Naive thymus-derived CD4-positive, alpha-beta T cell (primary cell): ENCODE measurements at regions of chr14 and their contacts with region 1.

Region 1: DNA sequence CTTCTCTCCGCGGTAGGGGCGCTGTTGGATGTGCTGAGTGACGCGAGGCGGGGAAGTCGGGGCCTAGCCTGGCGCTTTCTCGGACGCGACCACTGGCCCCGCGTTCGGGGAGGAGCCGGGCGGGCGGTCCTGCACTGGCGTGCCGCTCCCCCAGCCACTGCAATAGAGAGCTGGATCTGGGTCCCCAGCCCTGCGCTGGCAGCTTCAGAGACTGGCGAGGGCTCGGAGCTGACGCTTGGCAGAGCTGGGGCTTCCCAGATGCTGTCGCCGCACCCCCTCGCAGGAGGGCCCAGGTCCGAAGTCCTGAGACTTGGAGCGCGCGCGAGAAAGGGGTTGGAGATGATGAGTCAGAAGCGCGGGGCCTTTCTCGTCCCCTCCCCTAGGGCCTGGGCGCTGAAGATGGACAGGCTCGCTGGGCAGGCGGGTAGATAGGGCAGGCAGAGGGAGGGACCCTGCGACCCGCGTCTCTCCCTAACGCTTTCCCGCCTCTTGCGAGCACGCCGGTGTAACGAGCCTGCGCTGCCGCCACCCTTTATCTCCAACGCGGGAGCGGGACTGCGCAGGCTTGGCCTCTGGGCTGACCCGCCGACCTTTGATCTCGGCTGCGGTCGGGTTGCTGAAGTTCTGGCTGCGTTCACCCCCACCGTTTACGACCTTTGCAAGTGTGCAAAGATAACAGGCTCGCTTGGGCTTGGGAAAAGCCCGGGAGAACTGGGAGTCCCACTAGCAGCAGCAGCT is 3.0 kb downstream of the TMEM253 start:
- DNase-seq: peak; percentile 87 to 94 (median 92)
- ATAC-seq: peak; percentile 92
- H3K4me3 ChIP-seq: peak overlapping the region; percentile 94
- H3K4me3 Mint-ChIP-seq: peak overlapping the region; percentile 74 to 99 (median 91)
- H3K27ac ChIP-seq: peak overlapping the region; percentile 96
- H3K27ac Mint-ChIP-seq: peak overlapping the region; percentile 25 to 97 (median 89)
- H3K4me1 ChIP-seq: peaks cover 3 to 8% of the 10 kb centered on the region in 2 donors
- H3K4me1 Mint-ChIP-seq: peaks cover 23 to 41% (median 26%) of the 10 kb centered on the region in 7 donors
- H3K27me3 ChIP-seq: peaks cover 0 to 4% of the 10 kb centered on the region in 2 donors
- H3K27me3 Mint-ChIP-seq: peaks cover 0 to 11% (median 0%) of the 10 kb centered on the region in 5 donors

Region 2: DNA sequence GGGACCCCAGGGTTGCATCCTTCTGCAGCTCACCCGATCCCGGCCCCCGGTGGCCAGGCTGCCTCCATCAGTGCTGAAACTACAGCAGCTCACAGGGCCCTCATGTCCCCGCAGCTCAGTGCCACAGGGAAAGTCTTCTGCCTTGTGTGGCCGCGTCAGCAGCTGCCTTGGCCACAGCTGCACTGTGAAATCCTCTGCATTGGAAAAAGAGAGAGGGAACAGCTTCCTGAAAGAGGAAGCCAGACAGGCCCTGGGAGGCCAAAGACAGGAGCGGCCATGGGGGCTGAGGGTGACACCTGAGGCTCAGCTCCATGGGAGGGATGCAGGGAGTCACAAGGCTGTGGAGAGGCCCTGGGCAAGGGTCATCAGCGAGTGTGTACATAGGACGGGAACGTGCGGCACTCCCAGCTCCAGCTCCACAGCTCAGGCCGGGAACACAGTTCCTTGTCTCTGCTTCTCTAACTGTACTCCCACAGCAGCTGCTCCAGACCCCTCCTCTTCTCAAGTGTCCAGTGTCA is 727.7 kb before region 1 on chr14:
- CTCF ChIA-PET with region 1: no interaction called
- POLR2A ChIA-PET with region 1: no interaction called
- intact Hi-C with region 1: no loop called
- DNase-seq: no peak
- ATAC-seq: no peak
- H3K4me3 ChIP-seq: no peak overlapping the region
- H3K4me3 Mint-ChIP-seq: no peak overlapping the region
- H3K27ac ChIP-seq: no peak overlapping the region
- H3K27ac Mint-ChIP-seq: peak overlapping the region in 1 of 9 donors; percentile 41
- H3K4me1 ChIP-seq: no peaks in the 10 kb centered on the region
- H3K4me1 Mint-ChIP-seq: no peaks in the 10 kb centered on the region
- H3K27me3 ChIP-seq: no peaks in the 10 kb centered on the region
- H3K27me3 Mint-ChIP-seq: no peaks in the 10 kb centered on the region

Region 3: GRCh38 chr14:20461274-20462001 is 642.4 kb before region 1 on chr14 and contains the start of gene PIP4P1:
- CTCF ChIA-PET with region 1: no interaction called
- POLR2A ChIA-PET with region 1: no interaction called
- intact Hi-C with region 1: loop called (anchors 2 to 5 kb)
- DNase-seq: peak; percentile 95 to 100 (median 99)
- ATAC-seq: peak; percentile 92
- H3K4me3 ChIP-seq: peak within 1 kb of the TSS; percentile 83
- H3K4me3 Mint-ChIP-seq: peak within 1 kb of the TSS; percentile 81 to 97 (median 92)
- H3K27ac ChIP-seq: peak within 1 kb of the TSS; percentile 96
- H3K27ac Mint-ChIP-seq: peak within 1 kb of the TSS; percentile 88 to 99 (median 92)
- H3K4me1 ChIP-seq: peaks cover 20 to 21% of the 10 kb centered on the region in 2 donors
- H3K4me1 Mint-ChIP-seq: peaks cover 18 to 36% (median 32%) of the 10 kb centered on the region in 7 donors
- H3K27me3 ChIP-seq: no peaks in the 10 kb centered on the region
- H3K27me3 Mint-ChIP-seq: peaks cover 0 to 2% (median 0%) of the 10 kb centered on the region in 5 donors
- total RNA-seq, gene PIP4P1: 34.9 to 87.1 (median 74.2) TPM

Region 4: GRCh38 chr14:20989572-20990551 is 114.0 kb before region 1 on chr14 and contains the start of gene METTL17:
- CTCF ChIA-PET with region 1: no interaction called
- POLR2A ChIA-PET with region 1: no interaction called
- intact Hi-C with region 1: loop called (anchors 1 kb)
- DNase-seq: peak; percentile 64 to 88 (median 81)
- ATAC-seq: peak; percentile 95
- H3K4me3 ChIP-seq: peak within 1 kb of the TSS; percentile 86
- H3K4me3 Mint-ChIP-seq: peak within 1 kb of the TSS; percentile 86 to 97 (median 92)
- H3K27ac ChIP-seq: peak within 1 kb of the TSS; percentile 77
- H3K27ac Mint-ChIP-seq: peak within 1 kb of the TSS; percentile 86 to 98 (median 95)
- H3K4me1 ChIP-seq: peaks cover 12 to 16% of the 10 kb centered on the region in 2 donors
- H3K4me1 Mint-ChIP-seq: peaks cover 0 to 46% (median 37%) of the 10 kb centered on the region in 7 donors
- H3K27me3 ChIP-seq: no peaks in the 10 kb centered on the region
- H3K27me3 Mint-ChIP-seq: no peaks in the 10 kb centered on the region
- total RNA-seq, gene METTL17: 75.4 to 129 (median 96.7) TPM

Region 5: DNA sequence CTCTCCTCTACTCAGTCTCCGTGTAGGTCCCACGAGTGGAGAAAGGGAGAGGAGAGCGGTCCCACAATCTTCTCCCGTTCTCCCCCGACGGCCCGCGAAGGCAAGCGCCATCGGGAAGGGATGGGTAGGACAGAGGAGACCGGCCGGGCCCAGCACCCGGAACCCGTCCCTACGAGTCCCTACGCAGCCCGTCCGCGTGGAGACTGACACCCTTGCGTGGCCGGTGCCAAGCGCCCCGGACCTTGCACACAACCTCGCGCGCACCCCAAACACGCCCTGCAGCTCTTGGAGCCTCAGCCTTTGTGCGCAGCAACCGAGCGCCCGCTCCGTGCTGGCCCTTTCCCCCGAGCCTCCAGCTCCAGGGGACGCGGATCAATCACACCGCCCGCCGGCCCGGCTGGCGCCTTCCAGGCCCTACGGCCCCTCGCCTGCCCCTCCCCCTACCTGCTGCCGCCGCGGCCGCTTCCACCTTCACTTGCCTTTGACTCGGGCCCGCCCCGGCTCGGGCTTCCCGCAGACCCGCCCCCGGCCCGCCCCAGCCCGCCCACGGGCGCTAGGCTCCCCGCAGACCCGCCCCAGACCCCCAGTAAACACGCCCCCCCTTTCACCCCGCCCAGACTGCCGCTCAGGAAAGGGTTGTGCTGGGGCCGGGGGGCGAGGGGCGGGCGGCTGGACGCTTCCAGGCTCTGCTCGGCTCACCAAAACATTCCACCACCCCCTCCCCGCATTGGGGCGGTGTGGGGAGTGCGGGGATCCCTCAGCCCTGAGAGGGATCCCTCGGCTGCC is 79.1 kb before region 1 on chr14 and contains the start of gene NDRG2:
- CTCF ChIA-PET with region 1: interaction called, 158 read pairs
- POLR2A ChIA-PET with region 1: interaction called, 4 read pairs
- intact Hi-C with region 1: loop called in 1 of 2 experiments (anchors 1 kb)
- DNase-seq: peak; percentile 50 to 78 (median 67)
- ATAC-seq: peak; percentile 93
- H3K4me3 ChIP-seq: peak within 1 kb of the TSS; percentile 70
- H3K4me3 Mint-ChIP-seq: peak within 1 kb of the TSS; percentile 84 to 97 (median 92)
- H3K27ac ChIP-seq: peak within 1 kb of the TSS; percentile 70
- H3K27ac Mint-ChIP-seq: peak within 1 kb of the TSS in 8 of 9 donors; percentile 66 to 92 (median 80)
- H3K4me1 ChIP-seq: peaks cover 7 to 13% of the 10 kb centered on the region in 2 donors
- H3K4me1 Mint-ChIP-seq: peaks cover 7 to 28% (median 23%) of the 10 kb centered on the region in 7 donors
- H3K27me3 ChIP-seq: no peaks in the 10 kb centered on the region
- H3K27me3 Mint-ChIP-seq: peaks cover 0 to 47% (median 0%) of the 10 kb centered on the region in 5 donors
- total RNA-seq, gene NDRG2: 5.9 to 39.9 (median 35.2) TPM

Region 6: DNA sequence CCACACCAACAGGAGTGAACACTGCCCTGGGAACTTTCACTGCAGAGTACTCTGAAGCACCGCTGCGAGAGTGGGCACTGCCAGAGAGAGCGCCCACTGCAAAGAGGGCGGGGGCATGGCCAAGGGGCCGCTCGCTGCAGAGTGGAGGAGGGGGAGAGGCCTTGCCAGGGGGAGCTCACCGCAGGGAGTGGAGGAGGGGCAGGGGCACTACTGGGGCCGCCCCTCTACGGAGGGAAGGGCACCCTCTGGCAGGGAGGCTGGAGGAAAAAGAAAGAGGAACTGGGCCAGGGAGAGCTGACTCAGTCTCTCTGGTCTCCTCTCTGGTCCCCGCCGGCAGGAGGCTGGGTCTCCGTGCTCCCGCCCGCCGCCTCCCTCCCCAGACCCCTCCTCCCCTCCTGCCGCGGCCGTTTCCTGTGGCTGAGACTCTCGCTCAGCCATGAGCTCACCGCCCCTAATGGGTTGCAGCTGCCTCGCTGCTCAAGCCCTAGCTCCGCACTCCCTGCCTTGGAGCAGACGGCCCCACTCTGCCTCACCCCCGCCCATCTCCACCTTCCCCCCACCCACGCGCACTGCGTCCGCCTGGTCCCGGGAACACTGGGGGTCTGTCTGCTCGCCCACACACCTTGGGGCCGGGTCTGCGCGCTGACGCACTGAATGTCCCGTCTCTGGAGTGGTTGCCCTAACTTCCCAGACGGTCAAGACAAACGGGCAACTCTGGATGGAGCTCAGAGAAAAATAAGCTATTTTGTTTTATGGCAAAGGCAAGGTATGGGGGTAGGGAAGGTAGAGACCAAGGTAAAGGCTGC is 32.5 kb before region 1 on chr14:
- CTCF ChIA-PET with region 1: interaction called, 76 read pairs
- POLR2A ChIA-PET with region 1: interaction called, 14 read pairs
- intact Hi-C with region 1: loop called (anchors 1 kb)
- DNase-seq: peak in 1 of 9 donors; percentile 36
- ATAC-seq: peak; percentile 63
- H3K4me3 ChIP-seq: peak overlapping the region; percentile 43
- H3K4me3 Mint-ChIP-seq: peak overlapping the region; percentile 69 to 90 (median 82)
- H3K27ac ChIP-seq: no peak overlapping the region
- H3K27ac Mint-ChIP-seq: peak overlapping the region in 5 of 9 donors; percentile 51 to 76 (median 54)
- H3K4me1 ChIP-seq: peaks cover 21 to 29% of the 10 kb centered on the region in 2 donors
- H3K4me1 Mint-ChIP-seq: peaks cover 23 to 40% (median 35%) of the 10 kb centered on the region in 7 donors
- H3K27me3 ChIP-seq: peaks cover 20 to 36% of the 10 kb centered on the region in 2 donors
- H3K27me3 Mint-ChIP-seq: peaks cover 51 to 69% (median 61%) of the 10 kb centered on the region in 5 donors

Region 7: DNA sequence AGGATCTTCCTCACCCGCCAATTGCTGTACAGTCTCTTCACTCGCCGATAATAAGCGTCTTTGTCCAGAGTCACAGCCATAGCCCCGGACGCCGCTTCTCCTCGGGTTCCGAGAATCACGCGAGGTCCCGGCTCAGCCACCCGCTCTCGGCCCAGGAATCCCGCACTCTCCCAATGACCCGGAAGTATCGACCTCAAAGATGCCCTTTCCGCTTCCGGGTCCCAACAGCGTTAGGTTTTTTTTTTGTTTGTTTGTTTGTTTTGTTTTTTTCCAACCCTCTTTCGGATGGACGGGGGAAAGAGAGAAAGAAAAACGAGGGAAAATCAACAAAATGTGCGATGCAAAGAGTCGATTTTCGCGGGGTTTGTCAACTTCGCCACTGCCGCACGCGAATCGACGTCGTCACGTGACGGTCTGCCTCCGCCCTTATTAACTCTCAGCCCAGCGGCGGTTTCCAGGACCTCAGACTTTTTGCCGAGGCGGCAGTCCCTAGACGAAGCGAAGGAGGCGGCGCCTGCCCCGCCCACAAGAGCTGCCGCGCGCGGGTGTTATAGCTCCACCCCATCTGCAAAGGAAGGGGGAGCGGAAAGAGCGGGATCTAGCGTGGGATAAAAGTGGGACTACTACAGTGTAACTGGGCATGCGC is 280.1 kb after region 1 on chr14 and contains the start of gene SUPT16H:
- CTCF ChIA-PET with region 1: no interaction called
- POLR2A ChIA-PET with region 1: no interaction called
- intact Hi-C with region 1: loop called (anchors 1 to 5 kb)
- DNase-seq: peak; percentile 78 to 91 (median 86)
- ATAC-seq: peak; percentile 97
- H3K4me3 ChIP-seq: peak within 1 kb of the TSS; percentile 98
- H3K4me3 Mint-ChIP-seq: peak within 1 kb of the TSS; percentile 92 to 99 (median 97)
- H3K27ac ChIP-seq: peak within 1 kb of the TSS; percentile 87
- H3K27ac Mint-ChIP-seq: peak within 1 kb of the TSS; percentile 97 to 100 (median 99)
- H3K4me1 ChIP-seq: peaks cover 3 to 11% of the 10 kb centered on the region in 2 donors
- H3K4me1 Mint-ChIP-seq: peaks cover 26 to 52% (median 45%) of the 10 kb centered on the region in 7 donors
- H3K27me3 ChIP-seq: no peaks in the 10 kb centered on the region
- H3K27me3 Mint-ChIP-seq: no peaks in the 10 kb centered on the region
- total RNA-seq, gene SUPT16H: 46.1 to 104 (median 78.6) TPM

Region 8: DNA sequence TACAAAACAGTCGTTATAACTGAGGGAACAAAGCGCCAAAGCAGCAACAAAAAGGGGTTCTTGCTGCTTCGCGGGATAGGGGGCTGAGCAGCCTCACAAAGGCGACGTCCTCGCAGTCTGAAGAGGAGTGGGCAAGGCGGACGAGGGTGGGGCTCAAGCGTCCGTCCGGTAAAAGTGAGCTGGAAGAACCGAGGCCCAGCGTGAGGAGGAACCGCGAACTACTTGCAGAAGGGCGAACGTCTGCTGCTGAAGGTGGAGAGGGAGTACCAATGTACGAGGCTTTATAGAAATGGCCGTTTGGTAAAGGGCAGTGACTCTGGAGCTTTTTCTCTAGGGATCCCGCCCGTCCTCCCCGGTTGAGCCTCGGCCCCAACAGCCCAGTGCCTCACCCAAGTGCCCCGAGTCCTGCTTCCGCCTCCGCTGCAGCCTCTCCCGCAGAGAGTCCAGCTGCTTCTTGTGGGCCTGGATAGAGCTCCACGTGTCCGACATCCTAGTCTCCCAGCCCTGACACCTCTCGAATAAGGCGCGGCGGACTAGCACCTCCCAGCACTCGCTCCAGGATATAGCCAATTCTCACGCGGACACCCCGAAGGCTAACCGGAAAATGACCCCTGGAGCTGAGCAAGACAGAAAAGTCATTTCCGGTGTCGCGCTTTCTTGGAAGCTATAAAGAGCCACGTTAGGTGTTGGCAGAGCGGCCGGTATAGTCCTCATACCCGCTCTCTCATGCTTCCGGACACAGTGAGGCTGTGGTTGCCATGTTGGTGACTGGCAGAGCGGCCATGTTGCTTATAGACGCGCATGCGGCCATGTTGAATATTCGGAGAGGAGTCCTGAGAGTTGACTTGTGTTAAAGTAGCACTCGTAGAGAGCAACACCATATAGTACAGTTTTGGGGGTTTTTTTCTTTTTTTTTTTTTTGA is 407.1 kb after region 1 on chr14 and contains the start of gene METTL3:
- CTCF ChIA-PET with region 1: no interaction called
- POLR2A ChIA-PET with region 1: no interaction called
- intact Hi-C with region 1: loop called (anchors 1 to 2 kb)
- DNase-seq: peak; percentile 78 to 95 (median 90)
- ATAC-seq: peak; percentile 100
- H3K4me3 ChIP-seq: peak within 1 kb of the TSS; percentile 94
- H3K4me3 Mint-ChIP-seq: peak within 1 kb of the TSS; percentile 92 to 100 (median 99)
- H3K27ac ChIP-seq: peak within 1 kb of the TSS; percentile 87
- H3K27ac Mint-ChIP-seq: peak within 1 kb of the TSS; percentile 97 to 99 (median 98)
- H3K4me1 ChIP-seq: peaks cover 15 to 21% of the 10 kb centered on the region in 2 donors
- H3K4me1 Mint-ChIP-seq: peaks cover 20 to 47% (median 42%) of the 10 kb centered on the region in 7 donors
- H3K27me3 ChIP-seq: no peaks in the 10 kb centered on the region
- H3K27me3 Mint-ChIP-seq: peaks cover 0 to 1% (median 0%) of the 10 kb centered on the region in 5 donors
- total RNA-seq, gene METTL3: 43.6 to 108 (median 75.3) TPM